Mammary epithelial cell (primary cell): ENCODE measurements at regions of chr7 and their contacts with region 1.

Region 1: DNA sequence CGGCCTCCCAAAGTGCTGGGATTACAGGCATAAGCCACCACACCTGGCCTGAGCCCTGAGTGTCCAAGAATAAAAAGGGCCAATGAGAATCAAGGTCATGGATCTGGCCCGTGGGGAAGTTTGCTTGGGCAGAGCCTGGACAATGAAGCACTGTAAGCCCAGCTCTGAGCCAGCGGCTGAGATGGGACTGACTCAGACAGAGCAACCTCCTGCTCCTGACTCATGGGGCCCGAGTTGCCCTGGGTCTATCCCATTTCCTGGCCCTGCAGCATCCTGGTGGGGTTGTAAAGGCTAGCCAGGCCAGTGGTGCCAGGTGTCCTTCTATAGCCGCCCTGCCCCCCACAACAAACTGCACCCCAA is 5.2 kb upstream of the MYH16 start:
- DNase-seq: peak; percentile 99
- H3K4me3 ChIP-seq: no peak overlapping the region
- H3K27ac ChIP-seq: peak overlapping the region; percentile 88
- H3K4me1 ChIP-seq: peaks cover 28% of the 10 kb centered on the region
- H3K27me3 ChIP-seq: no peaks in the 10 kb centered on the region
- CTCF ChIP-seq: no peak

Region 2: GRCh38 chr7:98974906-98975816 is 292.3 kb before region 1 on chr7:
- CTCF ChIA-PET with region 1: no interaction called
- dilution Hi-C with region 1: no loop called
- in situ Hi-C with region 1: no loop called
- intact Hi-C with region 1: no loop called
- DNase-seq: no peak
- H3K4me3 ChIP-seq: no peak overlapping the region
- H3K27ac ChIP-seq: no peak overlapping the region
- H3K4me1 ChIP-seq: no peaks in the 10 kb centered on the region
- H3K27me3 ChIP-seq: no peaks in the 10 kb centered on the region
- CTCF ChIP-seq: no peak

Region 3: GRCh38 chr7:99171731-99172130 is 95.7 kb before region 1 on chr7:
- CTCF ChIA-PET with region 1: no interaction called
- dilution Hi-C with region 1: loop called (anchors 5 kb)
- in situ Hi-C with region 1: no loop called
- intact Hi-C with region 1: no loop called
- DNase-seq: no peak
- H3K4me3 ChIP-seq: no peak overlapping the region
- H3K27ac ChIP-seq: no peak overlapping the region
- H3K4me1 ChIP-seq: no peaks in the 10 kb centered on the region
- H3K27me3 ChIP-seq: no peaks in the 10 kb centered on the region
- CTCF ChIP-seq: no peak

Region 4: GRCh38 chr7:99229234-99229633 is 38.2 kb before region 1 on chr7:
- CTCF ChIA-PET with region 1: no interaction called
- dilution Hi-C with region 1: loop called (anchors 5 kb)
- in situ Hi-C with region 1: no loop called
- intact Hi-C with region 1: no loop called
- DNase-seq: peak; percentile 51
- H3K4me3 ChIP-seq: no peak overlapping the region
- H3K27ac ChIP-seq: no peak overlapping the region
- H3K4me1 ChIP-seq: peaks cover 14% of the 10 kb centered on the region
- H3K27me3 ChIP-seq: no peaks in the 10 kb centered on the region
- CTCF ChIP-seq: no peak